HEK293 (cell line): ENCODE measurements at regions of chr15 and their contacts with region 1.

Region 1: DNA sequence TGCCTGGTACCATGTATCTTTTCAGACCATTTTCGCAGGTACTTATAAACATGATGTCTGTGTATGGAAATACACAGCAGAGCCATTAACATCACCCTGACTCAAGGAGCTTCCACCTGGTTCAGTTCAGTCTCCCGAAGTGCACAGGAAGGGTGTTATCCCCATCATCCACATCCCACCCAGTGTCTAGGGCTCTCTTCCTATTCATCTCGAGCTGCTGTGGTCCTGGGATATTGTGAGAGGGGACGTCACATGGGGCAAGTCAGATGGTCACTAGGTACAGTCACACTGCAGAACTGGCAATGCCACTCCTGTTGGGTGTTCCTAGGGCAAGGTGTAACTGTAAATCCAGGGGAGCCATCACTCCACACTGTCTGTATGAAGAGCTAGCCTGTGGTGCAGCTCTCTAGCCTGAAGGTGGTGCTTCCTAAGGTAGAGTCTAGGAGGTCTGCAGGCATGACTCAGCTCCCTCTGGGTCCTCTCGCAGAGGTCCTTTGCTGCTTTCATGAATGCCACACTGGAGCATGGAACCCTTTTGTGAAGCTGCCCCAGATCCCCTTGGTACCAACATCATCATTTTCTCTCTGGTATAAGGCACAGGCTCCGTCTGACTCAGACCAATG is 13.9 kb downstream of the ISLR2 start:
- H3K4me3 ChIP-seq: no peak overlapping the region
- H3K27ac ChIP-seq: no peak overlapping the region
- H3K4me1 ChIP-seq: no peaks in the 10 kb centered on the region
- CTCF ChIP-seq: no peak

Region 2: DNA sequence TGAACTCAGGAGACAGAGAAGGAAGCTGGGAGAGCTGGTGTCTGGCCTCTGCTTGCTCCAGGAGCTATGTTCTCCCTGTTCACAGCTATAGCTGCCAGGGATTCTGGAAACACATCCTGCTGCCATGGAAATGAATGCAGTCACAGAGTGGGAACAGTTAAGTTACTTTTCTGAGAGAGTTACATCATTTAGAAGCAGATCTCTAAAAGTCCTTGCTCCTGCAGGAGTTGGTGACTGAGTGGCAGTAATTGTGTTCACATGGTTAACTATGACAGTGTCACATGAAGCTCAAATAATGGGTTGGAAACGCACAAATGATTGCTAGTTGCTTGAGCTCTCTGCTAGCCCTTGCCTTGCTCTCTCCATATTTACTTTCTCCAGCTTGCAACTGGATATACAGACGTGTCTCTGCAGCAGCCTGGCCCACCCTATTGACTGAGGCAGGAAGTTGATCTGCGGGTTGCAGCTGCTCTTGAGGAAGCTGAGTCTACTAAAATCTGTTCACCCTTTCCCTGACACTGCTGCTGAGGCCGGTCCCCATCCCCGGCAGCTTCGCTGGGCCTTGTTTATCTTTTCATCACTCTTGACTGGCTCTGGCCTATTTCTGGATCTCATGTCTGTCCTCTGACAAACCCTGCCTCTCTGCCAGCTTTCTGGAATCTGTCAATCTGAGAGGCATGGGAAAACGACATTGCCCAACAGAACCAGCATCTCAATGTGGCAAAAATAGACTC is 12.6 kb after region 1 on chr15:
- CTCF ChIA-PET with region 1: interaction called, 10 read pairs
- POLR2A ChIA-PET with region 1: no interaction called
- H3K4me3 ChIP-seq: no peak overlapping the region
- H3K27ac ChIP-seq: no peak overlapping the region
- H3K4me1 ChIP-seq: no peaks in the 10 kb centered on the region
- CTCF ChIP-seq: no peak

Region 3: GRCh38 chr15:74584779-74585178 is 440.5 kb after region 1 on chr15:
- CTCF ChIA-PET with region 1: no interaction called
- POLR2A ChIA-PET with region 1: no interaction called
- H3K4me3 ChIP-seq: no peak overlapping the region
- H3K27ac ChIP-seq: peak overlapping the region; percentile 28
- H3K4me1 ChIP-seq: peaks cover 22% of the 10 kb centered on the region
- CTCF ChIP-seq: no peak